B cell (primary cell): ENCODE measurements at regions of chr11 and their contacts with region 1.

Region 1: GRCh38 chr11:76680518-76681425 is 10.2 kb upstream of the LRRC32 start:
- DNase-seq: peak; percentile 85
- ATAC-seq: peak; percentile 80
- H3K4me3 ChIP-seq: no peak overlapping the region
- H3K4me3 Mint-ChIP-seq: no peak overlapping the region
- H3K27ac ChIP-seq: no peak overlapping the region
- H3K27ac Mint-ChIP-seq: no peak overlapping the region
- H3K4me1 ChIP-seq: peaks cover 28 to 29% of the 10 kb centered on the region in 2 donors
- H3K4me1 Mint-ChIP-seq: peaks cover 43% of the 10 kb centered on the region
- H3K27me3 ChIP-seq: peaks cover 0 to 70% (median 20%) of the 10 kb centered on the region in 4 experiments
- H3K27me3 Mint-ChIP-seq: peaks cover 72% of the 10 kb centered on the region
- CTCF ChIP-seq: peak; percentile 93

Region 2: DNA sequence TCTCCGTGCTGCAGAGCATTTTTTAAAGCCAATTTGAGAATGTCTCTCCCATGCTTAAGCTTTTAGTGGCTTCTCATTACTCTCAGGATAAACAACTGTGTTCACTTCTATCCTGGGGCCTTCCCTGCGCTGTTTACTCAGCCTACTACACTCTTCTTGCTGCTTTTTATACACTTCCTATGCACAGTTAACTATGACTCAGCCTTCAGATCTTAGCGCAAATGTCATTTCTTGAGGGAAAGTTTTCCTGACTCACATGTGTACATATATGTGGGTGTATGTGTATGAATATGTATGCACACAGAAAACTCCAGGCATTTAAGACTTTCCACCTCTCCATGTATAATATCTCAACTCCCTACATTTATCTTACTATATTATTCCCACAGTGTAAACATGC is 309.6 kb before region 1 on chr11:
- CTCF ChIA-PET with region 1: no interaction called
- POLR2A ChIA-PET with region 1: interaction called, 11 read pairs
- intact Hi-C with region 1: no loop called
- DNase-seq: no peak
- ATAC-seq: no peak
- H3K4me3 ChIP-seq: no peak overlapping the region
- H3K4me3 Mint-ChIP-seq: no peak overlapping the region
- H3K27ac ChIP-seq: no peak overlapping the region
- H3K27ac Mint-ChIP-seq: no peak overlapping the region
- H3K4me1 ChIP-seq: peaks cover 3 to 6% of the 10 kb centered on the region in 2 donors
- H3K4me1 Mint-ChIP-seq: peaks cover 49% of the 10 kb centered on the region
- H3K27me3 ChIP-seq: no peaks in the 10 kb centered on the region
- H3K27me3 Mint-ChIP-seq: no peaks in the 10 kb centered on the region
- CTCF ChIP-seq: no peak

Region 3: DNA sequence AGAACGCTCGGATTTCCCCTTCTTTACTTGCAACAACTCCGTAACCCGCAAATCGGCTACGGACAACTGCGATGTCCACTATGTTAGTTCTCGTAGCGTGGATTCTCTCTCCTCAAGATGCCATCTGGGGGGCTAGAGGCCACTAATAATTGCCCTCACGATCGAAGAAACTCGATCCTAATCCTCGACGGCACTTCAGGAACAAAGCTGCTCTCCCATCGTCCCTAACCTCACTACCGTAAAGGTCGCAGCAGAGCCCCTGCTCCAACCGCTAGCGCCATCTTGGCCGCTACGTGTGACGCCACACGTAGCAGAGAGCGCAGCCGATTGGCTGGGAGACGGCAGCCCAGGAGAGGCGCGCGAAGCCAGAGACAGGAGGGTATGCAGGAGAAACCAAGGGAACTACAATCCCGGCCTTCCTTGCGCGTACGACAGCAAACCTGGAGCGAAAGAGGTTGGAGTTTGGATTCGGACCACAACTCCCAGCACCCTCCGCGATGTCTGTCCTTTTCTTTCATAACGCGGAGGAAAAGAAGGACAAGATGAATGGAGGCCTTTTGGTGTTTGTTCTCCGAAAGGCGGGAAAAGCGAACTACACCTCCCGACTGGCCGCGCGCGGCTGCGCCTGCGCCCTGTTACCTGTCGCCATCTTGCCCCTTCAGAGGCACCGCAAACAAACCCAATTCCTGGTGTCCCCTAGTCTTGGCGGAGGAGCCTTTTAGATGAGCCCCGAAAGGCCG is 236.2 kb before region 1 on chr11 and contains the start of gene EMSY:
- CTCF ChIA-PET with region 1: no interaction called
- POLR2A ChIA-PET with region 1: no interaction called
- intact Hi-C with region 1: loop called (anchors 1 kb)
- DNase-seq: peak; percentile 96
- ATAC-seq: peak; percentile 97
- H3K4me3 ChIP-seq: peak within 1 kb of the TSS; percentile 87 to 99 (median 97)
- H3K4me3 Mint-ChIP-seq: peak within 1 kb of the TSS; percentile 96
- H3K27ac ChIP-seq: peak within 1 kb of the TSS; percentile 80 to 86
- H3K27ac Mint-ChIP-seq: peak within 1 kb of the TSS; percentile 98
- H3K4me1 ChIP-seq: peaks cover 19 to 23% of the 10 kb centered on the region in 2 donors
- H3K4me1 Mint-ChIP-seq: peaks cover 35% of the 10 kb centered on the region
- H3K27me3 ChIP-seq: no peaks in the 10 kb centered on the region
- H3K27me3 Mint-ChIP-seq: no peaks in the 10 kb centered on the region
- CTCF ChIP-seq: no peak
- total RNA-seq, gene EMSY: 54.0 and 59.7 TPM in 2 replicates

Region 4: GRCh38 chr11:76551400-76551799 is 129.4 kb before region 1 on chr11:
- CTCF ChIA-PET with region 1: interaction called, 12 read pairs
- POLR2A ChIA-PET with region 1: no interaction called
- intact Hi-C with region 1: loop called (anchors 1 kb)
- DNase-seq: peak; percentile 25
- ATAC-seq: no peak
- H3K4me3 ChIP-seq: no peak overlapping the region
- H3K4me3 Mint-ChIP-seq: no peak overlapping the region
- H3K27ac ChIP-seq: no peak overlapping the region
- H3K27ac Mint-ChIP-seq: no peak overlapping the region
- H3K4me1 ChIP-seq: no peaks in the 10 kb centered on the region
- H3K4me1 Mint-ChIP-seq: peaks cover 4% of the 10 kb centered on the region
- H3K27me3 ChIP-seq: no peaks in the 10 kb centered on the region
- H3K27me3 Mint-ChIP-seq: no peaks in the 10 kb centered on the region
- CTCF ChIP-seq: peak; percentile 46

Region 5: GRCh38 chr11:76577199-76577920 is 103.4 kb before region 1 on chr11:
- CTCF ChIA-PET with region 1: interaction called, 27 read pairs
- POLR2A ChIA-PET with region 1: no interaction called
- intact Hi-C with region 1: no loop called
- DNase-seq: no peak
- ATAC-seq: no peak
- H3K4me3 ChIP-seq: no peak overlapping the region
- H3K4me3 Mint-ChIP-seq: no peak overlapping the region
- H3K27ac ChIP-seq: no peak overlapping the region
- H3K27ac Mint-ChIP-seq: no peak overlapping the region
- H3K4me1 ChIP-seq: no peaks in the 10 kb centered on the region
- H3K4me1 Mint-ChIP-seq: no peaks in the 10 kb centered on the region
- H3K27me3 ChIP-seq: peaks cover 0 to 19% (median 7%) of the 10 kb centered on the region in 4 experiments
- H3K27me3 Mint-ChIP-seq: peaks cover 28% of the 10 kb centered on the region
- CTCF ChIP-seq: no peak

Region 6: DNA sequence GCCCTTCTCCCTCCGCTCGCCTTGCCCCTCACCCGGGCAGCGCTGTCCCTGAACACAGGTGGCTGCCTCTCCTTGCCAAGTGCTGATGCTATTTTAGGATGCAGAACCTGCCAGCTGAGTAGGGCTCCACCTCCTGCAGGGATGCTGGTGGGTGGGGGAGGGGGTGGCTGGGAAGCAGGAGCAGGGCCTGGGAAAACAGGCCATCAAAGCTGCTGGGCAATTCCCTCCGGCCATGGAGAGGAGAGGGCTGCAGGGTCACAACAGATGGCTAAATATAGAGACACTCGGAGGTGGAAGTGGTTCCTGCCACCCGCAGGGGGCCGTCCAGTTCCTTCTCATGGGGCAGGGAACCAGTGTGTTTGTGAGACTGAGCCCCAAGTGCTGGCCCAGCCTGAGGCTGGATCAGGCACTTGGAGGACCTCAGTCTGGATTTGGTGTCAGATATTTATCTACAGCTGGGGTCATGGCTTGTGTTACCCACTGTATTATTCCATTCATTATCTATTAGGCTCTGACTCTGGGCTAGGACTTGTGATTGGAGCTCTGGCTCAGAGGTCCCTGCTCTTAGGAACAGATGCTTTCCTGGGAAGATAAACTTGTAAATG is 69.8 kb before region 1 on chr11:
- CTCF ChIA-PET with region 1: interaction called, 10 read pairs
- POLR2A ChIA-PET with region 1: no interaction called
- intact Hi-C with region 1: loop called (anchors 1 kb)
- DNase-seq: peak; percentile 69
- ATAC-seq: peak; percentile 36
- H3K4me3 ChIP-seq: no peak overlapping the region
- H3K4me3 Mint-ChIP-seq: no peak overlapping the region
- H3K27ac ChIP-seq: no peak overlapping the region
- H3K27ac Mint-ChIP-seq: no peak overlapping the region
- H3K4me1 ChIP-seq: peaks cover 8 to 15% of the 10 kb centered on the region in 2 donors
- H3K4me1 Mint-ChIP-seq: peaks cover 29% of the 10 kb centered on the region
- H3K27me3 ChIP-seq: peaks cover 0 to 37% (median 6%) of the 10 kb centered on the region in 4 experiments
- H3K27me3 Mint-ChIP-seq: peaks cover 42% of the 10 kb centered on the region
- CTCF ChIP-seq: peak; percentile 54

Region 7: DNA sequence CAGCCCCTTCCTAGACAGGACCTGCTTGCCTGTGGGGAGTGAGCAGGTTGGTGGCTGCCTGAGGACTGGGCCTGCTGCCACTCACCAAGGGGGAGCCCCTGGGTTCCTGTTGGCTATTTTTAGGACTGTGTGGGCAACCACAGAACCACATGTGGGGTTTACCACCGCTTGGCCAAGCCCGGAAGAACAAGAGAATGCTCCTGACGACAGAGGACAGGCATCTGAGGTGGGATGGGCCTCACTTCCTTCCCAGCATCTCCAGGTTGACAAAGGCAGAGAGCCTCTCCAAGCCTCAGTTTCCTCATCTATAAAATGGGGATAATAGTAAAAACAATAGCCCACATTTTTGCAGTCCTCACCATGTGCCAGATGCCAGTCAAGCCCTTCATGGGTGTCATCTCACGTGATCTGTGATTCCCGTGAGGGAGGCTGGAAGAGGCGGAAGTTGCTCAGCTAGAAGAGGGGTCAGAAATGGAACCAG is 53.8 kb before region 1 on chr11:
- CTCF ChIA-PET with region 1: interaction called, 17 read pairs
- POLR2A ChIA-PET with region 1: no interaction called
- intact Hi-C with region 1: no loop called
- DNase-seq: peak; percentile 93
- ATAC-seq: peak; percentile 63
- H3K4me3 ChIP-seq: peak overlapping the region in 1 of 5 experiments; percentile 30
- H3K4me3 Mint-ChIP-seq: peak overlapping the region; percentile 81
- H3K27ac ChIP-seq: peak overlapping the region in 1 of 2 donors; percentile 63
- H3K27ac Mint-ChIP-seq: peak overlapping the region; percentile 96
- H3K4me1 ChIP-seq: peaks cover 52 to 56% of the 10 kb centered on the region in 2 donors
- H3K4me1 Mint-ChIP-seq: peaks cover 65% of the 10 kb centered on the region
- H3K27me3 ChIP-seq: peaks cover 0 to 19% (median 0%) of the 10 kb centered on the region in 4 experiments
- H3K27me3 Mint-ChIP-seq: peaks cover 27% of the 10 kb centered on the region
- CTCF ChIP-seq: no peak

Region 8: DNA sequence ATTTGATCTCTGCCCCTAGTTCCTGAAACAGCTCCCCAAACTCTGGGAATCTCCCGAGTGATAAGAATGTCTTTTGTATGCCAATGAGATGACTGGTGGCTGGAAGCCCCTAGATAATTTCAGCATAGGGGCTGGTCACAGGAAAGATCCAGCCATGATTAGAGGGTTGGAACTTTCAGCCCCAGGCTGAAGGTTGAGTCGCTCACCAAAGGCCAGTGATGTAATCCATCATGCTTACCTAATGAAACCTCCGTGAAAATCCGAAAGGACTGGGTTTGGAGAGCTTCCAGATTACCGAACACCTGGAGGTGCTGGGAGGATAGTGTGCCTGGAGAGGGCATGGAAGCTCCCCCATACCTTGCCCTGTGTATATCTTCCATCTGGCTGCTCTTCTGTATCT is 36.2 kb before region 1 on chr11:
- CTCF ChIA-PET with region 1: no interaction called
- POLR2A ChIA-PET with region 1: no interaction called
- intact Hi-C with region 1: no loop called
- DNase-seq: no peak
- ATAC-seq: no peak
- H3K4me3 ChIP-seq: no peak overlapping the region
- H3K4me3 Mint-ChIP-seq: no peak overlapping the region
- H3K27ac ChIP-seq: no peak overlapping the region
- H3K27ac Mint-ChIP-seq: no peak overlapping the region
- H3K4me1 ChIP-seq: peaks cover 13% of the 10 kb centered on the region in 2 donors
- H3K4me1 Mint-ChIP-seq: peaks cover 28% of the 10 kb centered on the region
- H3K27me3 ChIP-seq: peaks cover 0 to 14% (median 6%) of the 10 kb centered on the region in 4 experiments
- H3K27me3 Mint-ChIP-seq: peaks cover 51% of the 10 kb centered on the region
- CTCF ChIP-seq: no peak

Region 9: DNA sequence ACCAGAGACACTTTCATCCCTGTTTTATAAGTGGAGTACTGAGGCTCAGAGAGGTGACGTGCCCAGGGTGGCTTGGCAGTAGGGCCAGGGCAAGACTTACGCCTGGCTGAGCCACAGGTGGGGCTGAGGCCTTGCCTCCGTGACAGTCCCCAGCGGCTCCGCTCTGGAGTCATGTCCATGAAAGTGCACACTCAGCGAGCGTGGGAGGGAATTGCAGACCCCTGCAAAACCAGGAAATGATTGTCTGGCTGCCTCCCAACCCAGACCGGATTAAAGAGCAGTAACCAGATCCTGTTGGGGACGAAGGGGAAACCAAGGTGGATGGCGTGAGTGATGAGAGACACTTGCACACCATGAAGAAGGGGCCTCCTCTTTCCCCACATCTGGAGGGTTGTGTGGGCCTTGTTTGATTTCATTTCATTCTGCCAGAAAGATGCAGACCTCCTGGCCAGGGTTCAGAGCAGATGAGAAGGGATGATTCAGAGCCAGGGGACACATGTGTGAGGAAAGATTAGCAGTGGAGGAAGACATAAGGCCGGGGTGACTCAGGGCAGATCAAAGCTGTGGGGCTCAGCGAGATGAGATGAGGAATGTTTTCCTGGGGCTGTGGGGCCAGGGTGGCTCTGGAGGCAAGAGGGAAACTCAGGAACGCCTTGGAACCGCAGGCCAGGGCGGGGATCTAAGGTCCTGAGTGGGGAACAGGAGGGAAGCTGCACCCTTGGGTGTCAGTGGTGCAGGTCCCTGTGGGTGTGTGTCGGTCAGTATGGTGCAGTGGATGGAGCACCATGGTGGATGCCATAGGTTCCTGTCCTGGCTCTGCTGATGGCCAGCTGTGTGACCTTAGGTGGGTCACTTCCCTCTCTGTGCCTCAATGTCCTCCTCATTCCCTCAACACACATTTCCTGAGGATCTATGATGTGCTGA is 19.7 kb after region 1 on chr11:
- CTCF ChIA-PET with region 1: no interaction called
- POLR2A ChIA-PET with region 1: no interaction called
- intact Hi-C with region 1: no loop called
- DNase-seq: no peak
- ATAC-seq: no peak
- H3K4me3 ChIP-seq: no peak overlapping the region
- H3K4me3 Mint-ChIP-seq: no peak overlapping the region
- H3K27ac ChIP-seq: no peak overlapping the region
- H3K27ac Mint-ChIP-seq: no peak overlapping the region
- H3K4me1 ChIP-seq: no peaks in the 10 kb centered on the region
- H3K4me1 Mint-ChIP-seq: no peaks in the 10 kb centered on the region
- H3K27me3 ChIP-seq: peaks cover 0 to 16% (median 2%) of the 10 kb centered on the region in 4 experiments
- H3K27me3 Mint-ChIP-seq: peaks cover 28% of the 10 kb centered on the region
- CTCF ChIP-seq: no peak